Aorta (tissue), 5 donors: ENCODE measurements at regions of chr3 and their contacts with region 1.

Region 1: DNA sequence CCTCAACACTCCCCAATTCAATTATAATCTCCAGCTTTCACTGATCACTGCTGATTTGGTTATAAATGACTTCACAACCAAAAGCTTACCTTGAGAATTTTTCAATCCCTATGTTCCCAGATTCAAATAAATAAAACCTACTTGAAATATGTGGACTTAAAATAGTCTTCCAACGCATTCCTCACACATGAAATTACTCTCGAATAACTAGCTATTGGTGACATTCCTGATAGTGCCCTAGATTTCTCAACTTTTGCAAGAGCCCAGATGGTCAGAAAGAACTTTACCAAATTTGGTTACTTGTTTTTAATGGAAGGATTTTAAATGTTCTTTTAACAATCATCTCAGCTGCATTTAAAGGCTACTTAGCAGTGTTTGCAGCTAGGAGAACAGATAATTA is 605.5 kb downstream of the FHIT start:
- DNase-seq: no peak
- ATAC-seq: no peak
- H3K4me3 ChIP-seq: no peak overlapping the region
- H3K27ac ChIP-seq: peak overlapping the region in 1 of 2 donors; percentile 38
- H3K4me1 ChIP-seq: peaks cover 5% of the 10 kb centered on the region in 2 donors
- H3K27me3 ChIP-seq: no peaks in the 10 kb centered on the region

Region 2: GRCh38 chr3:60456180-60456579 is 189.6 kb before region 1 on chr3:
- intact Hi-C with region 1: loop called in 1 of 2 experiments (anchors 10 kb)
- DNase-seq: no peak
- ATAC-seq: no peak
- H3K4me3 ChIP-seq: no peak overlapping the region
- H3K27ac ChIP-seq: no peak overlapping the region
- H3K4me1 ChIP-seq: no peaks in the 10 kb centered on the region
- H3K27me3 ChIP-seq: no peaks in the 10 kb centered on the region

Region 3: GRCh38 chr3:60755096-60755495 is 109.3 kb after region 1 on chr3:
- intact Hi-C with region 1: no loop called
- DNase-seq: no peak
- ATAC-seq: no peak
- H3K4me3 ChIP-seq: no peak overlapping the region
- H3K27ac ChIP-seq: no peak overlapping the region
- H3K4me1 ChIP-seq: no peaks in the 10 kb centered on the region
- H3K27me3 ChIP-seq: no peaks in the 10 kb centered on the region